Caco-2 (cell line): ENCODE measurements at regions of chr9 and their contacts with region 1.

Region 1: GRCh38 chr9:122213589-122214413 is 15.0 kb downstream of the LHX6 start:
- DNase-seq: peak; percentile 97
- H3K4me3 ChIP-seq: peak overlapping the region; percentile 72
- H3K4me3 Mint-ChIP-seq: peak overlapping the region; percentile 78
- H3K27ac Mint-ChIP-seq: peak overlapping the region; percentile 49
- H3K4me1 ChIP-seq: peaks cover 10% of the 10 kb centered on the region; the same call in 1 of the 2 replicates
- H3K4me1 Mint-ChIP-seq: peaks cover 7% of the 10 kb centered on the region
- H3K27me3 ChIP-seq: no peaks in the 10 kb centered on the region
- H3K27me3 Mint-ChIP-seq: peaks cover 3% of the 10 kb centered on the region
- CTCF ChIP-seq: no peak

Region 2: GRCh38 chr9:122159026-122159924 is 54.5 kb before region 1 on chr9 and contains the starts of genes MORN5 and NDUFA8:
- CTCF ChIA-PET with region 1: interaction called, 7 read pairs
- POLR2A ChIA-PET with region 1: no interaction called
- intact Hi-C with region 1: loop called (anchors 2 kb)
- DNase-seq: peak; percentile 97 to 98
- H3K4me3 ChIP-seq: peak within 1 kb of the TSS; percentile 83
- H3K4me3 Mint-ChIP-seq: peak within 1 kb of the TSS; percentile 98
- H3K27ac Mint-ChIP-seq: peak within 1 kb of the TSS; percentile 99
- H3K4me1 ChIP-seq: 0 out of 2 replicates have a peak, but pooled peaks cover 3% of the 10 kb centered on the region
- H3K4me1 Mint-ChIP-seq: peaks cover 6% of the 10 kb centered on the region
- H3K27me3 ChIP-seq: no peaks in the 10 kb centered on the region
- H3K27me3 Mint-ChIP-seq: no peaks in the 10 kb centered on the region
- CTCF ChIP-seq: no peak
- total RNA-seq, gene MORN5: not detected in 2 replicates
- total RNA-seq, gene NDUFA8: 58.0 and 63.5 TPM in 2 replicates

Region 3: DNA sequence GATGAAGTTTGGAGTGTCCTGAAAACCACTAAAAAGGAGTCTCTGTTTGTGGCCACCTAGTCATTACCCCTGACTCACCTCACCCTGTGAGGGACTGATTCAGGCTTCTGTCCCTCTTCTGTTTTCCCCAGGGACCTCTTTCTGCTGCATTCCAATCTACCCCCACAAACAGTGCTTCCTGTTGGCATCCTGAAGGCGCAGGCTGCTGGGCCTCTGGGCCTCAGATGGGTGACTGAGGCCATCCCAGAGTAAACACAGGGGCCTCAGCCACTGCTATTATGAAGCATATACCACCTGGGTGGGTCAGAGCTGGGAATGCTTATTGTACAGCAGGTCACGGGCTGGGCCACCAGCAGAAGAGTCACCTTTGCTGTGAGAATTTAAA is 34.1 kb before region 1 on chr9:
- CTCF ChIA-PET with region 1: interaction called, 3 read pairs
- POLR2A ChIA-PET with region 1: no interaction called
- intact Hi-C with region 1: loop called (anchors 1 kb)
- DNase-seq: peak; percentile 54 to 84
- H3K4me3 ChIP-seq: no peak overlapping the region
- H3K4me3 Mint-ChIP-seq: no peak overlapping the region
- H3K27ac Mint-ChIP-seq: peak overlapping the region; percentile 59
- H3K4me1 ChIP-seq: peaks cover 33% of the 10 kb centered on the region
- H3K4me1 Mint-ChIP-seq: peaks cover 9% of the 10 kb centered on the region
- H3K27me3 ChIP-seq: no peaks in the 10 kb centered on the region
- H3K27me3 Mint-ChIP-seq: no peaks in the 10 kb centered on the region
- CTCF ChIP-seq: no peak

Region 4: DNA sequence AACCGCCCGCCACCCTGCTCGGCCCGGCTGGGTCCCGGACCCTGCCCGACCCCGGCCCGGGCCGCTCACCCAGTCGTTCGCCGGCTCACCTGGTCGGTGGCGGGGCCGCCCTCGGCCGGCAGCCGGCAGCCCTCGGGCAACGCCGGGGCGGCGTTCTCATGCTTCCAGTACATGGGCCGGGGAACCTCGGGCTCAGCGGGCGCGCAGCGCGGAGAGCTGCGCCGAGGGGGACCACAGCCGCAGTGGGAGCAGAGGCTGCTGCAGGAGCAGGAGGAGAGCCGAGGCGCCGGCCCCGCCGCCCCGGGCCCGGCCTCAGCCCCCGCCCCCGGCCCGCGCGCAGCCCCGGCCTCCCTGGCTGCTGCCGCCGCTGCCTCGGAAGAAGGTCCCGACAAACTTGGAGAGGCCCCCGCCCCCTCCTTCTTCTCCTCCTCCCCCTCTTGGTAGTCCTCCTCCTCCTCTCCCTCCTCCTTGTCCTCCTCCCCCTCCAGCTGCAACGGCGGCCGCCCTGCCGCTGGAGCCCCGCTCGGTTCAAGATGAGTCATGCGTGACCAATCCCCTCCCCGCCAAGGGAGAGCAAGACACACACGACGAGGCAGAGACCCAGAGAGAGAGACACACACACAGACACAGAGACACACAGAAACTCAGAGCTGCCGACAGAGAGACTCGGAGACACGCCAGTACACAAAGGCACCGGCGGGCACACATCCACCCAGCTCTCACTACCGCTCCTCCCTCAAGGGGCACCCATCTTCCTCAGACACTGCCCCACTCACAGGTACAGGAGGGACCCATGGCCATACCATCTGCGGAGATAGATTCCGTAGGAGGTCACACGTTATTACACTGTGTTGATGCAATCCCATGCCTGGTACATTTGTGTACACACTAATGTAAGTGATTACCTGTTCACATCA is 15.0 kb after region 1 on chr9 and contains the start of gene LHX6:
- CTCF ChIA-PET with region 1: no interaction called
- POLR2A ChIA-PET with region 1: interaction called, 8 read pairs
- intact Hi-C with region 1: loop called (anchors 2 kb)
- DNase-seq: peak in 1 of 2 experiments; percentile 43
- H3K4me3 ChIP-seq: peak within 1 kb of the TSS; percentile 47
- H3K4me3 Mint-ChIP-seq: no peak within 1 kb of the TSS
- H3K27ac Mint-ChIP-seq: no peak within 1 kb of the TSS
- H3K4me1 ChIP-seq: 0 out of 2 replicates have a peak, but pooled peaks cover 8% of the 10 kb centered on the region
- H3K4me1 Mint-ChIP-seq: no peaks in the 10 kb centered on the region
- H3K27me3 ChIP-seq: peaks cover 1% of the 10 kb centered on the region; the same call in 1 of the 2 replicates
- H3K27me3 Mint-ChIP-seq: peaks cover 5% of the 10 kb centered on the region
- CTCF ChIP-seq: no peak
- total RNA-seq, gene LHX6: 6.1 and 7.6 TPM in 2 replicates

Region 5: DNA sequence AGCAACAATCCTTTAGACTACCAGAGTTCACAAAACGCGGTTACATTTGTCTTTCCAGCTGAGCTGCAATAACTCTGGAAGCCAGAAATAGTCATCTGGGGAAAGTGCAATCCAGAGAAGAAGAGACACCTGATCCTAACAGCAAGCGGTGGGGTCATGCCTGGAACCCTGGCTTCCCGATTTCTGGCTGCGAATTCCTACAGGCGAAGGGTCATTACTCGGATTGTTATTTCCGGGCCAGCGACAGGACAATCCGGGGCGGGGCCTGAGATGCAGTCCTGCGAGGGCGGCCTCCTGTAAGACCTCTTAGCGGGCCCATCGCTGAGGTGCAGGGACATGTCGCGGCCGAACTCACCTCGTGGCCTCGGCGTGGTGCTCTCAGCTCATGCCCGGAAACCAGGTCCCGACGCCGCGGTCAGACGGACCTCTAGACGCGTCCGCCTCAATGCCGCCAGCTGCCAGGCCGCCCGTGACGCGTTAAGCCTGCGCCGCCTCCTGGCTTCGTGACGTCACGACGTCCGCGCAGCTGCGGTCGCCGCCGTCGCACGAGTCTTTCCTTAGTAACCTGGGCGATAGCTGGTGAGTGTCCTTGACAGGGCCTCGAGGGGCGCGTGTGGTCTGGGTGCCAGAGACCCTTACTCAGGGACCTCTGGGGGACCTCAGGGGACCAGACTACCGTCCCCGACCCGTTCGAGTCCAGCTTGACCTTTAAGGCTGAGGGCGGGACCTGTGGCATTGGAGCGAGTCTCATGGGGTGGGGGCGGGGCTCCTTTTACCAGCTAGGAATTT is 50.8 kb after region 1 on chr9 and contains the starts of genes MRRF and RBM18:
- CTCF ChIA-PET with region 1: interaction called, 5 read pairs
- POLR2A ChIA-PET with region 1: interaction called, 24 read pairs
- intact Hi-C with region 1: loop called (anchors 2 kb)
- DNase-seq: peak; percentile 92 to 94
- H3K4me3 ChIP-seq: peak within 1 kb of the TSS; percentile 65
- H3K4me3 Mint-ChIP-seq: peak within 1 kb of the TSS; percentile 87
- H3K27ac Mint-ChIP-seq: peak within 1 kb of the TSS; percentile 99
- H3K4me1 ChIP-seq: 0 out of 2 replicates have a peak, but pooled peaks cover 3% of the 10 kb centered on the region
- H3K4me1 Mint-ChIP-seq: peaks cover 28% of the 10 kb centered on the region
- H3K27me3 ChIP-seq: no peaks in the 10 kb centered on the region
- H3K27me3 Mint-ChIP-seq: no peaks in the 10 kb centered on the region
- CTCF ChIP-seq: no peak
- total RNA-seq, gene MRRF: 61.7 and 64.6 TPM in 2 replicates
- total RNA-seq, gene RBM18: 20.6 and 23.1 TPM in 2 replicates